Aorta (tissue), 5 donors: ENCODE measurements at regions of chr10 and their contacts with region 1.

Region 1: DNA sequence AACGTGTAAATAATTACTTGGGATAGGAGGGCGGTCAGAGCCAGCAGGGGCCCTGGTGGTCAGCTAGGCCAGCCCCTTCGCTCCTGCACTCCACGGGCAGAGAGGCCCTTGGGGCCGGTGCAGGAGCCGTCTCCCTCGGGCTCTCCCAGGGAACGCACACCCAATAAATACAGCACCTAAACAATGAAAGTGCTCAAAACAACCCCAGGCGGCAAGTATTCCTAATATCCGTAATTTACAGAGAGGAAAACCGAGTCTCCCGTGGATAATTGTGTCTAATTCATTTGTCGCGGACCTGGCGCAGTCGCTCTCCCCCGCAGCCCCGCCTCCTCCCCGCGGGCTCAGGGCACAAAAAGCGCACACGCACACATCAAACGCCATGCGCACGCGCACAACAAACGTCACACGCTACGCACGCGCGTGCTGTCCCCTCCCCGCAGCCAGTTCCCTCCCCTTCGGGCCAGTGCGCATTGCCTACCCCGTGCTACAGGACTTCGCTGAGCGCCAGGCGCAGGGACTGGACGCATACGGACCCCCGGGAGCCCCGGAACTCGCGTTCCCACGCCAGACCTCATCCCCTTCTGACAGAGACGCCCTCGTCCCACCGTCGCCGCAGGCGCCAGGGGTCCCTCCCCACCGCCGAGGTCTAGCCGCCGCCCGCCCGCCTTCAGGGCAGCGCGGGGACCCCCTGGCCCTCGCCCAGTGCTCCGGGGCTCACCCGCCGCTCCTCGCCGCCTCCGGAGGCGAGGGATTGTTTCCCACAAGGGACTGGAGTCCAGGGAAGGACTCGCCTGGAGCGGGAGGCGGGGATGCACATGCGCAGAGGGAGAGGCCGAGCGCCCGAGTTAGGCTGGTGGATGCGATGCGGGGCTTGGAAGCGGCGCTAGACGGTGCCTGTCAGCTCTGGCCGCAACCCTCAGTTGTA is at the start of gene ZNF248:
- DNase-seq: peak; percentile 98 to 99
- ATAC-seq: peak; percentile 100
- H3K4me3 ChIP-seq: peak within 1 kb of the TSS; percentile 85 to 99
- H3K27ac ChIP-seq: peak within 1 kb of the TSS; percentile 98 to 99
- H3K4me1 ChIP-seq: peaks cover 2 to 3% of the 10 kb centered on the region in 2 donors
- H3K27me3 ChIP-seq: no peaks in the 10 kb centered on the region
- total RNA-seq, gene ZNF248: 15.1 to 21.1 TPM

Region 2: DNA sequence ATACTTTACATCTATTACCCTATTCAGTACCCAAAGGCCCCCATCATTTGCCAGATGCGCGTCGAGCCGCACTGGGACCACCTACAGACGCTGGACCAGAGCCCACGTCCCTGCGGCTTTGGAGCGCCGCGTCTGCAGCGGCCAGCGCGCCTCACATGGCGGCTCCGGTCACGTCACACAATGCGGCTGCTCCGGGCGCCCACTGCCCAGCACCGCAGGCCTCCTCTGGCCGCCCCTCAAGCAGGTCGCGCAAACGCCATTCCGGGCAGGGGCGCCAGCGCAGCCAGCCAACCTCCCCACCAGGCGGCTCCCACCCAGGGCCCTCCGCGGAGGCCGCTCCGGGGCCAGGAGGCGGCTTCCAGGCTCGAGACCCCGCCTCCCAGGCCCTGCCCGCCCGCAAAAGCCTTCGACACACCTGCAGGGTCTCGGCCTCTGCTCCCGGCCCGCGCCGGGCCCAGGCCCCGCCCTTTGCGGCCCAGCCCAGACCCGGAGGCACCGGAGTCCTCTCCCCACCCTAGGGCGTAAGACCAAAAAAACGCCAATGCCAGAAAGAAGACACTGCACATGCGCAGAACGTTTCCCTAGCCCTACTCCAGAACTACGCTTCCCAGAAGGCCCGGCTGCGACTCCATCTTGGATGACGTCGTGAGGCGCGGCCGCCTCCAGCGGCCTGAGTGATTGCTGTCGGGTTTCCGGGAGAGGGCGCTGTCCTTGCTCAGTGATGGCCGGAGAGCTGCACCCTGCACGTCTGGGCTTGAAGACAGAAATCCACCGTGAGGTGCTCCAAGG is 118.7 kb after region 1 on chr10 and contains the start of gene ZNF25:
- intact Hi-C with region 1: loop called (anchors 2 to 5 kb)
- DNase-seq: peak; percentile 99
- ATAC-seq: peak; percentile 100
- H3K4me3 ChIP-seq: peak within 1 kb of the TSS; percentile 83 to 93
- H3K27ac ChIP-seq: peak within 1 kb of the TSS; percentile 89 to 97
- H3K4me1 ChIP-seq: no peaks in the 10 kb centered on the region
- H3K27me3 ChIP-seq: no peaks in the 10 kb centered on the region
- total RNA-seq, gene ZNF25: 23.0 to 23.2 TPM

Region 3: DNA sequence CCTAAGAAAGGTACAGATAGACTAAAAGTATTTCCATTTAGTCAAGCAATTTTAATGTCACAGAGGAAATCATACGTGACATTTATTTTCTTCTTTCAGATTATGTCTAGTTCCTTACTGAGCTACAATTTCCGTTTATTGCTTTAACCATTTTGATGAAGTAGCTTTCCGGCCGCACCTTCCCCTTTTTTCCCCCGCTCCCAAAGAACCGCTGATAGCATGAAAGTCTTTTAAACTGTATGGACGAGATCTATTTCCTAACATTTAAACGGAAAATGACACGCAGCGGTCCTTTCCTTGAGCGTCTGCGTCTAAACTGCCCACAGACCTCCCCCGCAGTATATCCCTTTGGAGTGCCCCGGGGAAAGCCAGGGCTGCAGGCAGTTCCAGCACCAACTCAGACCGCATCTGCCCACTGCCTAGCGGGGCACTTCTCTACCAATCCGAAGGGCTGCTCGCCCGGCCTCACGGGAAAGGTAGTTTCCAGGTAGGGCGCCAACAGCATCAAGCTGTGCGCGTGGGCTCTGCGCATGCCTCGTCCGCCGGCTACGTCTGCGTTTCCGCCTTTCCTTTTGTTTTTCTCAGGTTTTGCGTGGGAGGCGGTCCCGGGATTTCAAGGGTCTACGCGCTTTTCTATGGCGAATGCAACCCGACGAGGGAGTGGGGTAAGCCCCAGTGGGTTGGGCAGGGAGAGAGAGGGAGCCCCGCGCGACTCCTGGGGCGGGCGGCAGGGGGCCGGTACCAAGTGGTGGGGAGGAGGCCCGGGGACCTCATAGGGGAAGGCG is 152.8 kb after region 1 on chr10 and contains the start of gene ZNF33A:
- intact Hi-C with region 1: loop called (anchors 5 kb)
- DNase-seq: peak; percentile 95 to 96
- ATAC-seq: peak; percentile 96
- H3K4me3 ChIP-seq: peak within 1 kb of the TSS; percentile 72 to 84
- H3K27ac ChIP-seq: peak within 1 kb of the TSS; percentile 88 to 89
- H3K4me1 ChIP-seq: no peaks in the 10 kb centered on the region
- H3K27me3 ChIP-seq: no peaks in the 10 kb centered on the region
- total RNA-seq, gene ZNF33A: 28.9 to 31.6 TPM

Region 4: GRCh38 chr10:38094158-38094920 is 236.8 kb after region 1 on chr10 and contains the start of gene ZNF37A:
- intact Hi-C with region 1: loop called in 1 of 2 experiments (anchors 10 kb)
- DNase-seq: peak; percentile 95 to 96
- ATAC-seq: peak; percentile 98
- H3K4me3 ChIP-seq: peak within 1 kb of the TSS; percentile 62 to 71
- H3K27ac ChIP-seq: no peak within 1 kb of the TSS
- H3K4me1 ChIP-seq: no peaks in the 10 kb centered on the region
- H3K27me3 ChIP-seq: no peaks in the 10 kb centered on the region
- total RNA-seq, gene ZNF37A: 23.1 to 25.3 TPM